ENCODE measurements at regions of chr19 and their contacts with region 1.

Region 1: GRCh38 chr19:50922317-50922853 is 11.2 kb upstream of the KLK4 start:
- DNase-seq: peak; percentile 90
- ATAC-seq: peak; percentile 100
- H3K4me3 Mint-ChIP-seq: no peak overlapping the region
- H3K27ac Mint-ChIP-seq: no peak overlapping the region
- H3K4me1 Mint-ChIP-seq: peaks cover 7% of the 10 kb centered on the region
- H3K27me3 Mint-ChIP-seq: peaks cover 34% of the 10 kb centered on the region

Region 2: DNA sequence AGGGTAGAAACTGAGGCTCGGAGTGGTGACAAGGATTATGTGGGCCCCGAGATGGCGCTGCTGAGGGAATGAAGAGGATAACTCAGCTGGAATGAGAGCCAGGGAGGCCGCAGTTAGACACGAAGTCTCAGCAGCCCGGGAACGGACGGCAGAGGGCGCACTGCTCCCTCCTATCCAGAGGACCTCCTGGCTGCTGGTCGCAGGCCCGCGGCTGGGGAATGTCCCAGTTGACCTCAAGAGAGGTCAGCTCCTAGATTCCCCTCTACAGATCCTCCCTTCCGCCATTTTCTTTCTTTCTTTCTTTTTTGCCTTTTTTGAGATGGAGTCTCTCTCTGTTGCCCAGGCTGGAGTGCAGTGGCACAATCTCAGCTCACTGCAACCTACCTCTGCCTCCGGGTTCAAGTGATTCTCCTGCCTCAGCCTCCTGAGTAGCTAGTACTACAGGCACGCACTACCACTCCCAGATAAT is 384.6 kb before region 1 on chr19:
- CTCF ChIA-PET with region 1: no interaction called
- POLR2A ChIA-PET with region 1: no interaction called
- intact Hi-C with region 1: loop called in 1 of 2 experiments (anchors 2 kb)
- DNase-seq: peak; percentile 88
- ATAC-seq: peak; percentile 88
- H3K4me3 Mint-ChIP-seq: no peak overlapping the region
- H3K27ac Mint-ChIP-seq: no peak overlapping the region
- H3K4me1 Mint-ChIP-seq: no peaks in the 10 kb centered on the region
- H3K27me3 Mint-ChIP-seq: peaks cover 14% of the 10 kb centered on the region

Region 3: DNA sequence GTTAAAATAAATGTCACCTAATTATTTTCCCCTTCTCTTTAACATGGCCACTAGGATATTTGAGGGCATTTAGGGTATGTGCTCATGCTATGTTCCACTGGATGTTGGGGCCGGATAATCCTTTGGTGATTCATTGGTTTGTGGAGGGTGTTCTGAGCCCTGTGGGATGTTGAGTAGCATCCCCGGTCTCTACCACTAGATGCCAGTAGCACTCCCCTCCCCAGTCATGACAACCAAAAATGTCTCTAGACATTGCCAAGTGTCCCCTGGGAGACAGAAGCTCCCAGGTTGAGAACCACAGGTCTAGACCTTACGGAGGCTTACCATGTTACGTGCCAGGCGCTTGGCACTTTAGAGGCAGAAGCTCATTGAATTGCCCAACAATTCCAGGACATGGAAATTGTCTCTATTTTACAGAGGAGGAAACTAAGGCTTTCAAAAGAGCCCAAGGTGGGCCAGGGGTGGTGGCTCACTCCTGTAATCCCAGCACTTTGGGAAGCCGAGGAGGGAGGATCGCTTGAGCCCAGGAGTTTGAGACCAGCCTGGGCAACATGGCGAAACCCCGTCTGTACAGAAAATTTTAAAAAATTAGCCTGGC is 216.9 kb before region 1 on chr19:
- CTCF ChIA-PET with region 1: no interaction called
- POLR2A ChIA-PET with region 1: no interaction called
- intact Hi-C with region 1: loop called in 1 of 2 experiments (anchors 1 kb)
- DNase-seq: peak; percentile 60
- ATAC-seq: peak; percentile 92
- H3K4me3 Mint-ChIP-seq: no peak overlapping the region
- H3K27ac Mint-ChIP-seq: no peak overlapping the region
- H3K4me1 Mint-ChIP-seq: no peaks in the 10 kb centered on the region
- H3K27me3 Mint-ChIP-seq: peaks cover 20% of the 10 kb centered on the region

Region 4: GRCh38 chr19:50768277-50768676 is 154.1 kb before region 1 on chr19:
- CTCF ChIA-PET with region 1: no interaction called
- POLR2A ChIA-PET with region 1: no interaction called
- intact Hi-C with region 1: no loop called
- DNase-seq: no peak
- ATAC-seq: no peak
- H3K4me3 Mint-ChIP-seq: no peak overlapping the region
- H3K27ac Mint-ChIP-seq: no peak overlapping the region
- H3K4me1 Mint-ChIP-seq: no peaks in the 10 kb centered on the region
- H3K27me3 Mint-ChIP-seq: peaks cover 10% of the 10 kb centered on the region

Region 5: DNA sequence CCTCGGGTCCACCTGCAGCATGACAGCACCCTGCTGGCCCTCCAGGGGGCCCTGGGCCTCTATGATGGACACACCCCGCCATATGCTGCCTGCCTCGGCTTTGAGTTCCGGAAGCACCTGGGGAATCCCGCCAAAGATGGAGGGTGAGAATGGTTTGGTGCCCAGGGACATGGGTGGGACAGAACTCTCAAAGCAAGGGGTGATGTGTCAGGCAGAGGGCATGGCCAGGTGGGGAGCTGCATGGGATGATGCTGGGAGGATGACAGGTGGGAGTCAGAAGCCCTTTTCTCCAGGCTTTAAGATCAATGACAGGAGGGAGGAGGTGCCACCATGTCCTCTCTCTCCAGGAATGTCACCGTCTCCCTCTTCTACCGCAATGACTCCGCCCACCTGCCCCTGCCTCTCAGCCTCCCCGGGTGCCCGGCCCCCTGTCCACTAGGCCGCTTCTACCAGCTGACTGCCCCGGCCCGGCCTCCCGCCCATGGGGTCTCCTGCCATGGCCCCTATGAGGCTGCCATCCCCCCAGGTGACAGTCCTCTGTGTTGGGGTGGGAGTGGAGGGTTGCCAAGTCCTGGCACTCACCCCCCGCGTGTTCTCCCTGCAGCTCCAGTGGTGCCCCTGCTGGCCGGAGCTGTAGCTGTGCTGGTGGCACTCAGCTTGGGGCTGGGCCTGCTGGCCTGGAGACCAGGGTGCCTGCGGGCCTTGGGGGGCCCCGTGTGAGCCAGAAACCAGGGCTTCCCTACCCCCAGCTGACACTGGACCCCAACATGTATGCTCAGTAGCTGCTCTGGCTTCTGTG is 127.7 kb before region 1 on chr19:
- CTCF ChIA-PET with region 1: interaction called, 6 read pairs
- POLR2A ChIA-PET with region 1: interaction called, 4 read pairs
- intact Hi-C with region 1: loop called in 1 of 2 experiments (anchors 5 kb)
- DNase-seq: peak; percentile 58
- ATAC-seq: peak; percentile 27
- H3K4me3 Mint-ChIP-seq: peak overlapping the region; percentile 26
- H3K27ac Mint-ChIP-seq: no peak overlapping the region
- H3K4me1 Mint-ChIP-seq: peaks cover 6% of the 10 kb centered on the region
- H3K27me3 Mint-ChIP-seq: no peaks in the 10 kb centered on the region

Region 6: DNA sequence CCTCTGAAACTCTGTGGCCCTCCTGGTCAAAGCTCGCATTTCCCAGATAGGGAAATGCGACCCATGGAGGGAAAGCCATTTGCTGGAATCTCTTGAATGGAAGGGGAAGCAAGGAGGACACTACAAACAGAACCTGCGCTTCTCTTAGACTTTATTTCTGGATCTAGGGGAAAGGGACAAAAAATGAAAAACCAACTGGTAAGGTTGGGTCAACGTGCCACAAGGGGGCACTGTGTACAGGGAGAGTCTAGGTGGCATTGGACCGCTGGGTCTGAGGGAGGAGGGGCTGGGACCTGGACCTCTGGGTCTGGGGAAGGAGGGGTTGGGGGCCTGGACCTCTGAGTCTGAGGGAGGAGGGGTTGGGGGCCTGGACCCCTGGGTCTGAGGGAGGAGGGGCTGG is 16.2 kb before region 1 on chr19:
- CTCF ChIA-PET with region 1: interaction called, 14 read pairs
- POLR2A ChIA-PET with region 1: no interaction called
- intact Hi-C with region 1: loop called (anchors 1 kb)
- DNase-seq: peak; percentile 76
- ATAC-seq: no peak
- H3K4me3 Mint-ChIP-seq: no peak overlapping the region
- H3K27ac Mint-ChIP-seq: no peak overlapping the region
- H3K4me1 Mint-ChIP-seq: peaks cover 9% of the 10 kb centered on the region
- H3K27me3 Mint-ChIP-seq: peaks cover 55% of the 10 kb centered on the region

Measured in activated CD4-positive, alpha-beta T cell treated with anti-CD3 and anti-CD28 coated beads for 36 hours (primary cell).